ENCODE measurements at regions of chr4 and their contacts with region 1.

Region 1: GRCh38 chr4:169912646-169913395 is 113.4 kb downstream of the MFAP3L start:
- DNase-seq: no peak
- H3K4me3 ChIP-seq: no peak overlapping the region
- H3K27ac ChIP-seq: no peak overlapping the region
- H3K4me1 ChIP-seq: no peaks in the 10 kb centered on the region
- H3K27me3 ChIP-seq: no peaks in the 10 kb centered on the region
- CTCF ChIP-seq: no peak
- POLR2A ChIP-seq: no peak

Region 2: DNA sequence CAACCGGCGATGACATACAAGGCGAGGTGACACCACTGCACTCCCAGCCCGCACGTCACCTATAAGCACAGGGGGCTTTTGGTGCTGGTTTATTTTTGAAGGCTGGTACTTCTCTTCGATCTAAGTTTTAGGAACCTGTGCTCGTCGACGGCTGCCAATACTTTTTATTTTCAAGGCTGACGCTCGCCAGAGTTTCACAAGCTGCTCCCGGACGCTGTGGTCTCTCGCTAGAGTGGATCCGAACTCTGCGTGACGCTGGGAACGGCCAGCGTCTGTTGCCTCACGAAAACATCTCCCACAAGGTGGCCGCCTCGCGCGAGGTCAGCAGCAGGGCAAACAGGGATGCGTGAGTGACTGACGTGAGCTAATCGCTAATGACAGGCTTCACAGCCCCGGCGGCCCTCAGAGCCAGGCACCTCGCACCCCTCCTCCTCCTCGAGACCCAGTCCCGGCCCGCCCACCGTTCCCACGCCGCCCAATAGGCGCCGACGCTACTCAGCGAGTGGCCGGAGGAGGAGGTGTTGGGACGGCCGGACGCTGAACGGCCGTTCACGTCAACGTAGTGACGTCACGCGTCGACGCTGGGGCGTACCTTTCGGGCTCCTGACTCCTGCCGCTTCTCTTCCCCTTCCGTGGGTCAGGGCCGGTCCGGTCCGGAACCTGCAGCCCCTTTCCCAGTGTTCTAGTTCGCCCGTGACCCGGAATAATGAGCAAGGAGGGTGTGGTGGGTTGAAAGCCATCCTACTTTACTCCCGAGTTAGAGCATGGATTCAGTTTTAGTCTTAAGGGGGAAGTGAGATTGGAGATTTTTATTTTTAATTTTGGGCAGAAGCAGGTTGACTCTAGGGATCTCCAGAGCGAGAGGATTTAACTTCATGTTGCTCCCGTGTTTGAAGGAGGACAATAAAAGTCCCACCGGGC is 292.6 kb before region 1 on chr4 and contains the start of gene CLCN3:
- intact Hi-C with region 1: no loop called
- DNase-seq: peak; percentile 100
- H3K4me3 ChIP-seq: peak within 1 kb of the TSS; percentile 58 to 74 (median 63)
- H3K27ac ChIP-seq: peak within 1 kb of the TSS; percentile 90 to 98 (median 97)
- H3K4me1 ChIP-seq: peaks cover 19 to 60% (median 40%) of the 10 kb centered on the region in 6 donors
- H3K27me3 ChIP-seq: no peaks in the 10 kb centered on the region
- CTCF ChIP-seq: peak in 8 of 11 experiments; percentile 3 to 56 (median 34)
- POLR2A ChIP-seq: peak; percentile 19 to 73 (median 71)
- total RNA-seq, gene CLCN3: 26.4 to 43.3 (median 35.6) TPM

Region 3: DNA sequence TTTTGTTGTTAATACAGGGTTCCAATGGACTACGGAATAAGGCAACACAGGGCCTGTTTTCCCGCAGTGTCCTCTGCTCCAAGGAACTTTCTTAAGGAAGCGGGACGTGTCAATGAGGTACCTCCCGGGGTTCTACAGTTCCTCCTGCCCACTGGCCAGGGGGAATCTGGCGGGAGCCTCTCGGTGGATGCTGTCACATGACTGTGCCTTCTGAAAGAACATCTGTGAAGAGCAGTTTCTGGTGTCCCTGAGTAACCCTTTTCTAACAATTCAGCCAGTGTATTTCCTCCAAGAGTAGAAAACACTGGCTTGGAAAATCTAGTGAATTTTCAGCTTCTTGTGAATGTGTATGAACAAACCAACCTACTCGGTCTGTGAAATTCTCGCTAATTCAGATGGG is 80.7 kb after region 1 on chr4:
- intact Hi-C with region 1: loop called (anchors 10 kb)
- DNase-seq: no peak
- H3K4me3 ChIP-seq: no peak overlapping the region
- H3K27ac ChIP-seq: no peak overlapping the region
- H3K4me1 ChIP-seq: no peaks in the 10 kb centered on the region
- H3K27me3 ChIP-seq: no peaks in the 10 kb centered on the region
- CTCF ChIP-seq: no peak
- POLR2A ChIP-seq: no peak

Region 4: DNA sequence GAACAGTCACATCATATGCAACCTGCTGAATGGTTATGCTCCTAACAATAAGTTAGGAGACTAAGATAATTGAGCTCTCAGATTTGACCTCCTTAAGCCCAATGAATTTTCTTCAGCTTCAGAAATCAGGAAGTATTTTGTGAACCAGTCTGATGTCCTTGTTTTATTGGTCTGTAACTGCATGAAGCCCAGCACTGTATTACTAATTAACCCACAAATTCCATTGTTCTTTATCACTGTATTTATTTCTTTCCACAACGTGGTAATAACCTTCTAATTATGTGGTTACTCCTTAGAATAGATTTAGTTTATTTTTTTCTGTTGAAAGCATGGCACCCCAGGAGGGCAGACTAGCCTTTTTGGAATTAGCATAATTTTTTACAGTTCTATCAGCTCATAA is 117.3 kb after region 1 on chr4:
- intact Hi-C with region 1: no loop called
- DNase-seq: no peak
- H3K4me3 ChIP-seq: no peak overlapping the region
- H3K27ac ChIP-seq: no peak overlapping the region
- H3K4me1 ChIP-seq: peaks cover 0 to 17% (median 12%) of the 10 kb centered on the region in 6 donors
- H3K27me3 ChIP-seq: peaks cover 0 to 26% (median 7%) of the 10 kb centered on the region in 7 donors
- CTCF ChIP-seq: no peak
- POLR2A ChIP-seq: no peak